HAP-1 (cell line): ENCODE measurements at regions of chr1 and their contacts with region 1.

Region 1: GRCh38 chr1:92623187-92623778 is 136.6 kb upstream of the GFI1 start:
- DNase-seq: no peak
- H3K4me3 ChIP-seq: no peak overlapping the region
- H3K4me1 ChIP-seq: no peaks in the 10 kb centered on the region
- H3K27me3 ChIP-seq: no peaks in the 10 kb centered on the region

Region 2: GRCh38 chr1:91997607-91998195 is 625.6 kb before region 1 on chr1:
- in situ Hi-C with region 1: loop called (anchors 25 kb)
- DNase-seq: peak; percentile 6 to 43
- H3K4me3 ChIP-seq: no peak overlapping the region
- H3K4me1 ChIP-seq: no peaks in the 10 kb centered on the region
- H3K27me3 ChIP-seq: no peaks in the 10 kb centered on the region; the same call in 1 of the 2 replicates

Region 3: GRCh38 chr1:92310185-92310597 is 313.1 kb before region 1 on chr1:
- in situ Hi-C with region 1: loop called (anchors 25 kb)
- DNase-seq: peak in 1 of 2 experiments; percentile 20
- H3K4me3 ChIP-seq: no peak overlapping the region
- H3K4me1 ChIP-seq: no peaks in the 10 kb centered on the region
- H3K27me3 ChIP-seq: no peaks in the 10 kb centered on the region

Region 4: DNA sequence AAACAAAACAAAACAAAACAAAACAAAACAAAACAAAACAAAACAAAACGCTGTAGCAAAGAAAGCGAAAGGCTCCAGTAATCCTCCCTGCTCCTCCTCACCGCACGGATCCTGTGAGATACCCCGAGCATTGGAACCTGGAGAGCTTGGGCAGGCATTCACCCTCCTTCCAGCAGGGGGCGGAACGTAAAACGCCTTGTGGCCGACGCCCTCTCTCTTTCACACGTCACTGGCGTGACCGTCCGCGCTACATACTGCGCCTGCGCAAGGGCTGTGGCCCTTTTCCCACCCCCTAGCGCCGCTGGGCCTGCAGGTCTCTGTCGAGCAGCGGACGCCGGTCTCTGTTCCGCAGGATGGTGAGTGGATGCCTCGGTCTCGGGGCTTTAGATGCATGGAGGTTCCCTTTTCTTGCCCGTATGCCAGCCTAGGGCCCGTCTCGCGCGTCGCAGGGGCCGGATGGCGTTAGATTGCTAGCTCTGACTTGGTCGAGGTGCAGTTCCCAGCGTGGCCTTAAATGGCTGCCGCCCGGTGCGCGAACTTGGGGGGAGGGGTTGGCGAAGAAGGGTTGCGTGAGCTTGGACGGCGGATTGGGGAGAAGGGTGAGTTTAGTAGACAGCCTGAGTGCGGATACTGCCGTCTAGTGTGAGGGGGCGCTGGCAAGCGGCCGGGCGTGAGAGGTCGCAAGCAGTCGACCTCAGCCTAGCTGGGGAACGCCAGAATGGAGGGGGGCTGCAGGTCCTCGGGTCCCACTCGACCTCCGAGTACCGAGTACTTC is 208.7 kb after region 1 on chr1 and contains the start of gene RPL5:
- in situ Hi-C with region 1: no loop called
- DNase-seq: peak; percentile 92 to 98
- H3K4me3 ChIP-seq: peak within 1 kb of the TSS; percentile 100
- H3K4me1 ChIP-seq: peaks cover 18% of the 10 kb centered on the region
- H3K27me3 ChIP-seq: no peaks in the 10 kb centered on the region

Region 5: DNA sequence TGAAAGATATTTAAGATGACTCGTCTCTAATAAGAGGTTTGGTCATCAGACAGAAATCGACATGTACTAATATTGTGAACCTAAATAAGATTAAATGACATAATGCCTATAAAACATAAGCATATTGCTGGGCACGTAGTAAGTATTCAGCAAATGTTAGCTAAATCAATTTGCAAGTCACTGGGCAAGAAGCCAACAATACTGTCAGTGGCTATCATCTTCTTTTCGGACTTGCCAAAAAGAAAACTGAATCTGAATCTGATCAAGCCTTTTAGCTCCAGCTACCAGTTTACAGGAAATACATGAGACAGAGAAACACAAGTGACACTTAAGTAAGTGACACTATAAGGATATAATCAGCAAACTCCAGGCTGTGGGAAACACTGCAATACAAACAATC is 254.5 kb after region 1 on chr1:
- in situ Hi-C with region 1: no loop called
- DNase-seq: no peak
- H3K4me3 ChIP-seq: no peak overlapping the region
- H3K4me1 ChIP-seq: no peaks in the 10 kb centered on the region
- H3K27me3 ChIP-seq: peaks cover 8% of the 10 kb centered on the region